ENCODE measurements at regions of chr21 and their contacts with region 1.

Region 1: GRCh38 chr21:31580866-31581276 is 78.6 kb upstream of the SOD1 start:
- DNase-seq: peak; percentile 68
- H3K4me3 ChIP-seq: no peak overlapping the region; a peak in 1 of 4 replicates
- H3K27ac ChIP-seq: no peak overlapping the region
- H3K4me1 ChIP-seq: no peaks in the 10 kb centered on the region
- H3K27me3 ChIP-seq: no peaks in the 10 kb centered on the region
- CTCF ChIP-seq: peak; percentile 83
- EP300 ChIP-seq: no peak
- RAD21 ChIP-seq: peak; percentile 91

Region 2: DNA sequence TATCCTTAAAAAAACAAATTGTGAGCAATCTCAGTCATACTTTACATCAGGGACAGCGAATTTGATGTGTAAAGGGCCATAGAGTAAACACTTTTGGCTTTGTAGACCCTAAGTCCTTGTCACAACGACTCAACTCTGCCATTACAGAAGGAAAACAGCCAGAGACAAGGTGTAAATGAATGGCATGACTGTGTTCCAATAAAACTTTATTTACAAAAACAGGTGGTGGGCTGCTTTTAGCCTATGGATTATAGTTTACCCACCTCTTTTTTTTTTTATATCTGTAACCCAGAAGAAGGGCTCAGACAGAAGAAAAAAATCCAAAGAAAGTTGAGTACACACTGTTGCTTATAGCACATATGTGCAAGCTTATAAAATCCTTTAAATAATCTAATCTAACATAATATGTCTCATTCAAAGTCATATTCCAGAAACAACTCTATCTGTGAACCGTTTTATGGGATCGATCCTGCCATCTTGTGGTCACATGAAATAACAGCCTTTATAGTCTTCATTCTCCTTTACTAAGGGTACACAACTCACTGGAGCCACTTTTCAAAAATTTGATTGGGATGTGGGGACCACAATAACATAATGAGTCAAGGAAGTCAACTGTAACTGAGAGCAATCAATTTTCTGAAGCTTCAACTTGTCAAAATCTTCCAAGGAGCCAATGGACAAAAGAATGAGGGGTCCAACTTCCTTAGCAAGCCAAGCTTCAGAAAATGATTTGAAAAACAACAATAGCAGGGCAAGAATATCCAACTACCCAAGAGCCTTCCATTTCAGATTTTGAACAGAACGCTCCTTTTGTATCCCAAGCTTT is 400.4 kb before region 1 on chr21:
- CTCF ChIA-PET with region 1: interaction called, 29 read pairs
- POLR2A ChIA-PET with region 1: no interaction called
- DNase-seq: peak; percentile 68
- H3K4me3 ChIP-seq: no peak overlapping the region
- H3K27ac ChIP-seq: peak overlapping the region in 1 of 2 experiments; percentile 36; a peak in 2 of 4 replicates
- H3K4me1 ChIP-seq: peaks cover 0 to 30% of the 10 kb centered on the region in 2 experiments; a peak in 2 of 4 replicates
- H3K27me3 ChIP-seq: no peaks in the 10 kb centered on the region
- CTCF ChIP-seq: peak; percentile 78
- EP300 ChIP-seq: no peak
- RAD21 ChIP-seq: peak; percentile 87

Region 3: GRCh38 chr21:31213795-31214194 is 367.1 kb before region 1 on chr21:
- CTCF ChIA-PET with region 1: interaction called, 10 read pairs
- POLR2A ChIA-PET with region 1: no interaction called
- DNase-seq: no peak
- H3K4me3 ChIP-seq: no peak overlapping the region
- H3K27ac ChIP-seq: no peak overlapping the region
- H3K4me1 ChIP-seq: no peaks in the 10 kb centered on the region
- H3K27me3 ChIP-seq: no peaks in the 10 kb centered on the region
- CTCF ChIP-seq: 0 out of 2 replicates have a peak, but pooled peaks have one; percentile 23
- EP300 ChIP-seq: no peak
- RAD21 ChIP-seq: peak; percentile 40

Region 4: DNA sequence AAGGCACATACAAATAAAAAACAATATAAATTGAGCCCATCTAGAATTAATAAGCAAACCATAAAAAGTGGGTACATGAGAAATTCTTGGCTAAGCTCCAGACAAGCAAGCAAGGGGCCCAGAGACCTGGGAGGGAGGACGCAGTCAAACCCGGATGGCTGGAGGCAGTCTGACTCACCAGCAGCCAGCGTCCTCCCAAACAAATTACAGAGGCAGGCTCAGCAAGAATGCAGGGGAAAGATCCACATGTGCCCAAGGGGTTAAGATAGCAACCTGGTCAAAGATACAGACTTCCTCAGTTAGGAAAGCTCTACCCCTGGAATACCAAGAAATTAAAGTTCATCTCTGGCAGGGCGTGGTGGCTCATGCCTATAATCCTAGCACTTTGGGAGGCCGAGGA is 229.4 kb before region 1 on chr21:
- CTCF ChIA-PET with region 1: interaction called, 25 read pairs
- POLR2A ChIA-PET with region 1: no interaction called
- DNase-seq: no peak
- H3K4me3 ChIP-seq: no peak overlapping the region
- H3K27ac ChIP-seq: no peak overlapping the region
- H3K4me1 ChIP-seq: peaks cover 0 to 8% of the 10 kb centered on the region in 2 experiments; a peak in 2 of 4 replicates
- H3K27me3 ChIP-seq: no peaks in the 10 kb centered on the region; the same call in 1 of the 2 replicates
- CTCF ChIP-seq: no peak
- EP300 ChIP-seq: no peak
- RAD21 ChIP-seq: no peak

Region 5: GRCh38 chr21:31566064-31566463 is 14.8 kb before region 1 on chr21:
- CTCF ChIA-PET with region 1: interaction called, 39 read pairs
- POLR2A ChIA-PET with region 1: no interaction called
- DNase-seq: no peak
- H3K4me3 ChIP-seq: no peak overlapping the region
- H3K27ac ChIP-seq: no peak overlapping the region
- H3K4me1 ChIP-seq: no peaks in the 10 kb centered on the region
- H3K27me3 ChIP-seq: no peaks in the 10 kb centered on the region
- CTCF ChIP-seq: 0 out of 2 replicates have a peak, but pooled peaks have one; percentile 34
- EP300 ChIP-seq: no peak
- RAD21 ChIP-seq: peak; percentile 65

Region 6: DNA sequence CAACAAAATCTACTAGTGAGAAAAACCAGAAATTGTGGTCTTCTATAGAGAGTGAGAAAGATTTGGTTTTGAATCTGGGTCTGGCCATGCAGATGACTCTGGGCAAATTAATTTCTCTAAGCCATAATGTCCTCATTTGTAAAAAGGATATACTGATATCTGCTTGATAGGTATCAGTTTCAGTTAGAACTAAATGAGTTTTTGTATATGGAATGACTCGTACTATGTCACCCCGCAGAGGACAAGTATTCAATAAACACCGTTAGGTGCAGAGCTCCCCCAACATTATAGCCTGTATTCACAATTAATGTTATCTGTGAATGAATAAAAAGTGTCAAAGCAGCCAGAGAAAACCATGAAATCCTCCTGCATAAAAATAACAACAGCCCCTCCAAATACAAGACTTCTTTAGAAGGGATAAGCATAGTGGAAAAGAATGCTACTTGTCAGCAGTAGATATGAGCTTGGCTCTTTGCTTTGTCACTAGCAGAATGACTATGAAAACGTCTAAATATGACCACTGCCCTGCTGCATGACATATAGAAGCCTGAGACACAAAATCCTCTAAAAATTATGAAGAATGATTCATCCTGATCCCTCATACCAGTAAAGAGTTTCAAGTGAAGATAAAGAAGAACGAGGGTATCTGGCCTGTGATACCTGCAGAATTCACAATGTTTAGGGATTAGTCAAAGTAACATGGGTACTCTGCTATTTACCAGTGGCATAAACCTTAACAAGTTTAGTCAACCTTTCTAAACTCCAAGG is 133.3 kb after region 1 on chr21:
- CTCF ChIA-PET with region 1: no interaction called
- POLR2A ChIA-PET with region 1: no interaction called
- DNase-seq: no peak
- H3K4me3 ChIP-seq: no peak overlapping the region
- H3K27ac ChIP-seq: peak overlapping the region; percentile 18 to 39
- H3K4me1 ChIP-seq: peaks cover 4 to 37% of the 10 kb centered on the region in 2 experiments; a peak in 3 of 4 replicates
- H3K27me3 ChIP-seq: no peaks in the 10 kb centered on the region
- CTCF ChIP-seq: no peak
- EP300 ChIP-seq: no peak
- RAD21 ChIP-seq: no peak